OCI-LY7 (cell line): ENCODE measurements at regions of chr17 and their contacts with region 1.

Region 1: DNA sequence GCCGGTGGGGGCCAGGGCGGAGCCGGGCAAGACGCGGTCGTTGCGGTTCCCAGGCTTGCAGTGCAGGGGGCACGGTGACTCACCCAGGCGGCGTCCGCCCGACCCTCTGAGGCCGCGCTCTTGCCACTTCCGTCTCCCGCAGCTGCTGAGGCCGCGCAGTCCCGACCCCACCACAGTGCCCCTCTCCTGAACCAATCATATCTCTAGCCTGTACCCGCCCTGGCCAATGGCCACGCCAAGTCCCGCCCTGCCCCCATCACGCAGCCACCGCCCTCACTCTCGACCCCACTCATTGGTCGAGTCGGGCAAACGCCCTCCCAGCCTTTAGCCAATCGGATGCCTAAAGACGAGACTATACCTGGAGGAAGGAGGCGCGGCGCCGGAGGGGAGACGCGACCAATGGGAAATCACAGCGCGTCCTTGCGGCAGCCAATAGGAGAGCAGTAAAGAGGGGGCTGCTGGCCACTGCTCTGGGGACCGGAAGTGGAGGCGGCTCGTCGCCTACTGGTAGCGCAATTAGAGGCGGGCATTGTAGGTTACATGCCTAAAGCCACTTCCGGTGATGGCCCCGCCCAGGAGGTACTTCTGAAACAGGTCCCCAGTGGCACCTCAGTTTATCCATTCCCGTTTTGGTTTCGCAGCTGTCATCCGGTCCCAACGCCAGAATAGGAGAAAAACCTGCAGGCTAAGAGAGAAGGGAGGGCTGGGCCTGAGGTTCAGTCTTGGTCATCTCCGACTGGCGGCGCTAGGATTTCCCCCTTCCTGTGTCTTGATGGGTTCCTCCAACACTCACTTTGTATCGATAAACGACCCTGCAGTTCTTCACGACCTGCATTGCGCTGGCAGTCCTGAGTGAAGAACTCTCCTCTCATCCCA is 3.5 kb upstream of the MTMR4 start:
- DNase-seq: peak; percentile 100
- H3K4me3 ChIP-seq: peak overlapping the region; percentile 86
- H3K27ac ChIP-seq: peak overlapping the region; percentile 88
- H3K4me1 ChIP-seq: peaks cover 58% of the 10 kb centered on the region
- CTCF ChIP-seq: no peak

Region 2: DNA sequence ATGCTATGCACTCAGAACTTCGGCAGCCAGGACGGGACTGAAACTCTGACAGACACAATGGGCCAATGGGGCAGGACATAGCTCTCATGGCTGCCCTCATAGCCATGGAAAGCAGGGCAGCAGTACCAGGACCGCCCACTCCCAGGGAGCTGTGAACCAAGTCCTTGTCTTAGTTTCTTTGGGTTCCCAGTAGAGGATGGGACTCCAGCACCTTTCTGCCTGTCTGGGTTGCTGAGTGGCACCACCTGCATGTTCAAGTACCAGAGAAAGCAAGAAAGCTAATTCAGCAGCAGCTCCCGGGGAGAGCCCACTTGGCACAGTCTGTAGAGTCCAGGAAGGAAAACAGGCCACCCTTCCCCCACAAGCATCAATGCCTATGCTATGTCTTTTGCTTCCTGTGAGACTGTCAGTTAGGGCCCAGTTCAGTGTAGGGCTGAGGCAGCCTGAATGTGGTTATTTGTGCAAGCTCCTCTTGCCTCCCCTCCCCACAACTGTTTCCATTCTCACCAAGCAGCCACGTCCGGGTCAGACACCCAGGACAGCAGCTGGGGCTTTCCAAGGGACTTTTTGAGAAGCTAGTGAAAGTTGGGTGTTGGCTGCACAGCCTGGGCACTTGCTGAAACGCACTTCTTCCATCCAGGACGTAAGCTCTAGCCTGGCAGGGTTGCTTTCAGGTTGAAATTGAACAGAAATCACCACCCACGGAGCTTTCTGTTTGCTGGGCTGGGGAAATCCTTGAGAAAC is 173.8 kb before region 1 on chr17:
- CTCF ChIA-PET with region 1: no interaction called
- POLR2A ChIA-PET with region 1: no interaction called
- intact Hi-C with region 1: loop called (anchors 5 kb)
- DNase-seq: peak; percentile 95
- H3K4me3 ChIP-seq: peak overlapping the region; percentile 63
- H3K27ac ChIP-seq: peak overlapping the region; percentile 99
- H3K4me1 ChIP-seq: peaks cover 80% of the 10 kb centered on the region
- CTCF ChIP-seq: no peak

Region 3: DNA sequence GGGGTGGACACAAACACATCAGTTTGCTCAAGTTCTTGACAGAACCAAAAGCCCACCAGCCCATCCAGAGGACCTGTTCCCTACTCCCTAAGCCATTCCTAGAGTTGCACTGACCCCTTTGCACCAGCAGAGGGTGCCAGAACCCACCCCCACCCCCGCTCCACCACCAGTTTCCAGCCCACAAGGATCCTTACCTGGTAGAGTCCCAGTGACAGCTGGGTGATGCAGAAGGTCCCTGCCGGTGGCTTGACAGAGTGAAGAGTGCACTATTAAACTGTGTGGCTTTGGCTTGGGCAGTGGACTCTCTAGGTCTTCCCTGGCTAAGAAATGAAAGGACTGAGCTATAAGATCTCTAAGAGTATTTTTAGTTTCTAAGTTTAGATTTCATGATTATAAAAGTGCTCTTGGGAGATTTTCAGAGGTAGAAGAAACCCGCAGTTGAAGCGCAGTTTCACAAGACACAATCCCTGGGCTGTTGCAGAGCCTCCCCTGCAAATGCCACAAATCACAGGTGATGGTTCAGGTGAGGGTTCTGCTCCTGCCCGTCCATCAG is 69.8 kb after region 1 on chr17:
- CTCF ChIA-PET with region 1: interaction called, 5 read pairs
- POLR2A ChIA-PET with region 1: no interaction called
- intact Hi-C with region 1: loop called (anchors 1 kb)
- DNase-seq: peak; percentile 73
- H3K4me3 ChIP-seq: no peak overlapping the region
- H3K27ac ChIP-seq: no peak overlapping the region
- H3K4me1 ChIP-seq: no peaks in the 10 kb centered on the region
- CTCF ChIP-seq: peak; percentile 98

Region 4: GRCh38 chr17:58692239-58693055 is 174.5 kb after region 1 on chr17 and contains the start of gene RAD51C:
- CTCF ChIA-PET with region 1: no interaction called
- POLR2A ChIA-PET with region 1: no interaction called
- intact Hi-C with region 1: loop called (anchors 10 kb)
- DNase-seq: peak; percentile 93
- H3K4me3 ChIP-seq: peak within 1 kb of the TSS; percentile 84
- H3K27ac ChIP-seq: peak within 1 kb of the TSS; percentile 67
- H3K4me1 ChIP-seq: peaks cover 23% of the 10 kb centered on the region
- CTCF ChIP-seq: no peak
- total RNA-seq, gene RAD51C: 51.0 and 69.1 TPM in 2 replicates

Region 5: DNA sequence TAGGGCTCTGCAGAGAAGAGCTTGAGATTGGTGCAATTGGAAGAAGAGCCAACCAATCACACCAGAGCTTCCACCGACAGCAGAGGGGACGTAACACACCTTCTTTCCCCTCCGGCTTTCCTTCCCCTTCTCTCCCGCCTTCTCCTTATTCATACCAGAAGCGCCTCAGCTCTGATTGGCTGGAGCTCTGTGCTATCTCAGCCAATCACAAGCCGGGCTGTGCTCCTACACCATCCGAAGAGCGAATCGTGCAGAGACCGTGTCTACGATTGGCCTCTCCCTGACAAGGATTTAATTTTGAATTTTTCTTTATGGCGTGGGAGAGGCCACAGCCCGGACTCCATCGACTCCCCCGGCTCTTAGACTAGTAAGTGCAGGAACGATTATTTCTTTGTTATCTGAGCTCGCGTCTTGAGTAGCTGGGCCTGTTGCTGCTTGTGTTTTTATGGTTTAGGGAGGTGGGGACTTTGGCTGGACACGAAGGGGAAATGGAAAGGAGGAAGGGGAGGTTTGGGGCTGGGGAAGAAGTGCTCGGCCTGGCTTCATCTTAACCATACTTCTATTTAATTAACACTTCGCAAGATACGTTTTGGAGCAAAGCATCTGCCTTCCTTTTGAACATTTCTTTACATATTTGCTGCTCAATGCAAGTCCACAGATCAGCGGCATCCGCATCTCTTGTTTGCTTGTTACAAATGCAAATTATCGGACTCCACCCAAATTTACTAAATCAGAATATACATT is 637.6 kb after region 1 on chr17 and contains the start of gene PRR11:
- CTCF ChIA-PET with region 1: no interaction called
- POLR2A ChIA-PET with region 1: no interaction called
- intact Hi-C with region 1: loop called (anchors 1 kb)
- DNase-seq: peak; percentile 99
- H3K4me3 ChIP-seq: peak within 1 kb of the TSS; percentile 94
- H3K27ac ChIP-seq: peak within 1 kb of the TSS; percentile 91
- H3K4me1 ChIP-seq: peaks cover 68% of the 10 kb centered on the region
- CTCF ChIP-seq: no peak
- total RNA-seq, gene PRR11: 21.9 and 27.3 TPM in 2 replicates